Sigmoid colon (tissue), 7 donors: ENCODE measurements at regions of chr2 and their contacts with region 1.

Region 1: GRCh38 chr2:130797493-130798435 is 39.0 kb upstream of the ARHGEF4 start:
- DNase-seq: peak; percentile 92
- H3K4me3 ChIP-seq: peak overlapping the region; percentile 46 to 86 (median 68)
- H3K27ac ChIP-seq: peak overlapping the region; percentile 89 to 92 (median 91)
- H3K4me1 ChIP-seq: peaks cover 0 to 15% (median 14%) of the 10 kb centered on the region in 4 donors
- H3K27me3 ChIP-seq: no peaks in the 10 kb centered on the region
- CTCF ChIP-seq: peak; percentile 68 to 85 (median 80)
- EP300 ChIP-seq: no peak
- POLR2A ChIP-seq: no peak

Region 2: GRCh38 chr2:130744287-130745117 is 53.3 kb before region 1 on chr2:
- intact Hi-C with region 1: no loop called
- DNase-seq: no peak
- H3K4me3 ChIP-seq: no peak overlapping the region
- H3K27ac ChIP-seq: no peak overlapping the region
- H3K4me1 ChIP-seq: no peaks in the 10 kb centered on the region
- H3K27me3 ChIP-seq: peaks cover 0 to 3% (median 0%) of the 10 kb centered on the region in 3 donors
- CTCF ChIP-seq: no peak
- EP300 ChIP-seq: no peak
- POLR2A ChIP-seq: no peak

Region 3: DNA sequence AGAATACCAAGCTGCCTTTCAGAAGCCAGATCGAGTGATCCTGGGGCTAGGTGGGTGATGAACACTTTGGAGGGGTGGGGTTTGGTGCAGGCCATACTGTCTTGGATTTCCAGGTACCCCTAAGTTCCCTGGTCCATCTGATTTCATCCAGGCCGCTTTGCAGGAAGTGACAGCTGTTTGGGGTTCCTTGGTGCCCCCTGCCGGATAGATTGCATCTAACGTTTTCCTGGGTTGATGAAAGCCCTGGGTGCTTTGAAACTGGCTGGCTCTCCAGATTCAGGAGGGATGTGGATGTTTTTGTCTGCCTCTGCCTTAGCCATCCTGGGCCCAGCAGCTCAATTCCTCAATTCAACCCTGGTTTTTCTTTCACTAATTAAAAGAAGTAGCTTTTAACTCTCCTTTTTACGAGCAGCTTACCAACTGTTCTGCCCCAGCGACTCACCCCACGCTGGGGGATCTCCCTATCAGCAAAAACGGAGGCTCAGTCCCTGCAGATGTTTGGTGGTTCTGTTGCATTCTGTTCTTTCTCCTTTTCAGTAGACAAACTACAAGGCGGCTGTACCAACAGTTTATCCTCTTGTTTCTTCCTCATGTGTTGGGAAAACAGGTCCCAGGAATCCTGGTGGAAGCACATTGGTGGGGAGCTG is 76.1 kb after region 1 on chr2:
- intact Hi-C with region 1: loop called (anchors 1 kb)
- DNase-seq: peak; percentile 83
- H3K4me3 ChIP-seq: no peak overlapping the region
- H3K27ac ChIP-seq: no peak overlapping the region
- H3K4me1 ChIP-seq: no peaks in the 10 kb centered on the region
- H3K27me3 ChIP-seq: no peaks in the 10 kb centered on the region
- CTCF ChIP-seq: peak; percentile 26 to 64 (median 52)
- EP300 ChIP-seq: no peak
- POLR2A ChIP-seq: no peak

Region 4: GRCh38 chr2:130920415-130921163 is 122.8 kb after region 1 on chr2:
- intact Hi-C with region 1: loop called (anchors 1 kb)
- DNase-seq: no peak
- H3K4me3 ChIP-seq: no peak overlapping the region
- H3K27ac ChIP-seq: no peak overlapping the region
- H3K4me1 ChIP-seq: no peaks in the 10 kb centered on the region
- H3K27me3 ChIP-seq: peaks cover 0 to 16% (median 11%) of the 10 kb centered on the region in 3 donors
- CTCF ChIP-seq: peak; percentile 29 to 64 (median 48)
- EP300 ChIP-seq: no peak
- POLR2A ChIP-seq: no peak